ENCODE measurements at regions of chrX and their contacts with region 1.

Region 1: DNA sequence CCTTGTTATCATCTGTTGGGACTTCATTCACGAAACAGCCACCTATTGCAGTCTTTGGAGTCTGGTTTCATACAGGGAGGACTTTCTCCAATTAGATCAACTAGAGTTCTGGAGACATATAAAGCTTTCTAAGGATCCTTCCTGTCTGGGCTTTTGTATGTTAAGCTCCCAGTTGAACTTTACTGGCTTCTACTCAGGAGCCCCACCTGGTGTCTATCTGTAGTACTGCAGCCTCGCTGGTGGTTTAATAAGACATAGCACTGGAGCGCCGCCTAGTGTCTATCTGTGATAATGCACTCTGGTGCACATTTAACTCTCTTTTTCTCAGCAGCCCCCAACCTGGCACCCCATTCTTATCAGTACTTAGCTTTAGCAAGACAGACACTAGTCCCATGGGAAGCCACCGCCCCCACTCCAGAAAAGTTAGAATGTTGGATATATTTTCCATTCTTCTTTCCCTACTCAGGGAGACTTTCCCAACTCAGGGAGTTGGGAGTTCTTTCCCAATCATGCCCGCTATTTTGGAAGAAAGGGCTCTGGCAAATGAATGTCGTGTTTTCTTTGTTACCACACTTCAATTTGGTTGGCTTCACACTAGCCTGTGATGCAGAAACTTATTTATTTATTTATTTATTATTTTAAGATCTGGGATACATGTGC is 36.9 kb upstream of the SYTL4 start:
- DNase-seq: peak; percentile 69
- ATAC-seq: peak; percentile 60
- H3K4me3 ChIP-seq: no peak overlapping the region
- H3K27ac ChIP-seq: no peak overlapping the region
- H3K4me1 ChIP-seq: no peaks in the 10 kb centered on the region
- H3K27me3 ChIP-seq: no peaks in the 10 kb centered on the region
- CTCF ChIP-seq: peak; percentile 99

Region 2: DNA sequence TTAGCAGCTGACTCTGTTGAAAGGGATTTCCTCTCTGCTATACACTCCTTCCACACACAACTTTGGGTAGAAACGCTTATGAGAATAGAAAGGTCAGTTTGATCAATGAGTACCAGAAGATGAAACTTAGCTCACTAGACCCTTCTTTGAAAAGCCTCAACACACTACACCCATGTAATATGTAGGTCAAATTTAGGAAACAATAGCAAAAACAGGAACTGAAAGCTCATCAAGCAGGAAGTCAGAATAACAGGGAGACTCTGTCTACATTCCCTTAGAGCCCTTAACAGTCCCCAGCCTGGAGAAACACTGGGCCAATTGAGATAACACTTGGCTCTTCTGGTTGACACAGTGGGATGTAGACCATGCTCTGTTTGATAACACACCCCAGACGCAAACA is 94.1 kb before region 1 on chrX:
- CTCF ChIA-PET with region 1: interaction called, 43 read pairs
- POLR2A ChIA-PET with region 1: no interaction called
- in situ Hi-C with region 1: no loop called
- intact Hi-C with region 1: no loop called
- DNase-seq: no peak
- ATAC-seq: no peak
- H3K4me3 ChIP-seq: no peak overlapping the region
- H3K27ac ChIP-seq: no peak overlapping the region
- H3K4me1 ChIP-seq: no peaks in the 10 kb centered on the region
- H3K27me3 ChIP-seq: no peaks in the 10 kb centered on the region
- CTCF ChIP-seq: no peak

Region 3: GRCh38 chrX:100685284-100685996 is 83.4 kb before region 1 on chrX:
- CTCF ChIA-PET with region 1: interaction called, 18 read pairs
- POLR2A ChIA-PET with region 1: no interaction called
- in situ Hi-C with region 1: no loop called
- intact Hi-C with region 1: loop called (anchors 1 kb)
- DNase-seq: peak; percentile 74
- ATAC-seq: peak; percentile 94
- H3K4me3 ChIP-seq: no peak overlapping the region
- H3K27ac ChIP-seq: no peak overlapping the region
- H3K4me1 ChIP-seq: no peaks in the 10 kb centered on the region
- H3K27me3 ChIP-seq: peaks cover 2% of the 10 kb centered on the region; the same call in 1 of the 2 replicates
- CTCF ChIP-seq: peak; percentile 85

Region 4: GRCh38 chrX:101407748-101408531 is 639.1 kb after region 1 on chrX and contains the starts of genes GLA and HNRNPH2:
- CTCF ChIA-PET with region 1: no interaction called
- POLR2A ChIA-PET with region 1: interaction called, 10 read pairs
- in situ Hi-C with region 1: no loop called
- intact Hi-C with region 1: no loop called
- DNase-seq: peak; percentile 99
- ATAC-seq: peak; percentile 97
- H3K4me3 ChIP-seq: peak within 1 kb of the TSS; percentile 99
- H3K27ac ChIP-seq: peak within 1 kb of the TSS; percentile 87
- H3K4me1 ChIP-seq: peaks cover 12% of the 10 kb centered on the region
- H3K27me3 ChIP-seq: no peaks in the 10 kb centered on the region
- CTCF ChIP-seq: no peak
- total RNA-seq, gene GLA: 115 TPM
- total RNA-seq, gene HNRNPH2: 91.5 TPM

Measured in Panc1 (cell line).